ENCODE measurements at regions of chr17 and their contacts with region 1.

Region 1: GRCh38 chr17:74118504-74118903 is 85.0 kb upstream of the RPL38 start:
- DNase-seq: no peak
- H3K4me3 ChIP-seq: no peak overlapping the region
- H3K27ac ChIP-seq: no peak overlapping the region
- H3K4me1 ChIP-seq: no peaks in the 10 kb centered on the region
- H3K27me3 ChIP-seq: peaks cover 0 to 37% of the 10 kb centered on the region in 2 donors
- CTCF ChIP-seq: no peak
- POLR2A ChIP-seq: no peak

Region 2: DNA sequence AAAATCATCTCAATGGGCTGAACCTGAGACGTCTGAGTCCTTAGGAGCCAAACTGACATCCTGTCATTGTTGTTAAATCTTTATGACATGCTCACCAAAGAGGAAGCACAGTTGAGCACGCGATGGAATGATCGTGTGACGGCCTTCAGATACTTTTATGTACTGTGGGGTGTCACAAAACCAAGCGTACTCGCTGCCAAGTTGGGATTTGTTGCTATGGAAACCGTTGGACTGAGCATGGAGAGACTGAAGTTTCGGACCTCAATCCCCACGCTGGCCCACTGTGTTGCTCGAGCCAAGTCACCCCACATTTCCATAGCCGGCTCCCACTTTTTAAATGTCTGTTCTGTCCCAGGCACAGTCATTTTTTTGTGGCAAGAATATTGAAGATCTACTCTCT is 251.4 kb before region 1 on chr17:
- intact Hi-C with region 1: loop called (anchors 5 kb)
- DNase-seq: no peak
- H3K4me3 ChIP-seq: no peak overlapping the region
- H3K27ac ChIP-seq: no peak overlapping the region
- H3K4me1 ChIP-seq: no peaks in the 10 kb centered on the region
- H3K27me3 ChIP-seq: no peaks in the 10 kb centered on the region
- CTCF ChIP-seq: no peak
- POLR2A ChIP-seq: no peak